ENCODE measurements at regions of chr3 and their contacts with region 1.

Region 1: DNA sequence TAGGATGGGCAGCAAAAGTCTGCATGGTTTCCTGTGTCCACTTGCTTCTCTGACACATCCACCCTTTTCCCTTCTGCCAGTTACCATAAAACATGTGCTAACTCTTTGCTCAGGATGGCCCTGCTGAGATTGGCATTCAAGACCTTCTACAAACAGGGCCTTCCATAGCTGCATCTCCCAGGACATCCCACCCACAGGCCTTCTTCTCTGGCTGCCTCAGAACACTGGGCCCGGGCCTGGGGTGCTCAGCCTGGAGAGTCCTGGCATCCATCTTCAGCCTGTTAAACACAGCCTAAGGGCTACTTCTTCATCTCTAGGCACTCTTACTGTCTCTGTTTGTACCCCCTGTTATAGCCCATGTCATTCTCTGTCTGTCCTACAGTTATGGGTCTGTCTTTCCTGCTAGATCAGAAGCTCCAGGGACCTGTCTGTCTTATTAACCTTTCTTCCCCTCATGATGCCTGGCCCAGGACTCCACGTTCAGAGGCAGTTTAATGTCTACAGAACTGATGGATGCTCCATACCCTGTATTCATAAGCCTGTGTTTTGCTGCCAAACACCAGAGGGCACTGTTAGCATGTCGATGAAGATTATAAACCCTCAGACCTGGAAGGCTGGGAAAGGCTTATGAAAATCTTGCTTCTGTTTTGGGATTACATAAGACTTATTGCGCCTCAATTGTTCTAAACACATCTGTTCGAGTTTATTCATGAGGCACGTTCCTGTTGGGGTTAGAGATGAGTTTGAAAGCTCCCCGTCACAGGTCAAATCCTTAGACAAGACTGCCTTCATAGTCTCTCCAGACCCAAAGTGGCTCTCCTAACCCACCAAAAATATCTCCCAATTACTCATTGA is 16.5 kb downstream of the SEMA3G start:
- DNase-seq: peak; percentile 50 to 51
- H3K4me3 ChIP-seq: no peak overlapping the region
- H3K27ac ChIP-seq: no peak overlapping the region
- H3K4me1 ChIP-seq: peaks cover 9% of the 10 kb centered on the region; the same call in 1 of the 2 replicates
- H3K27me3 ChIP-seq: no peaks in the 10 kb centered on the region
- CTCF ChIP-seq: peak; percentile 75

Region 2: GRCh38 chr3:52291508-52292181 is 136.7 kb before region 1 on chr3:
- CTCF ChIA-PET with region 1: no interaction called
- POLR2A ChIA-PET with region 1: no interaction called
- intact Hi-C with region 1: no loop called
- DNase-seq: peak in 1 of 2 experiments; percentile 21
- H3K4me3 ChIP-seq: no peak overlapping the region
- H3K27ac ChIP-seq: no peak overlapping the region
- H3K4me1 ChIP-seq: peaks cover 7% of the 10 kb centered on the region; the same call in 1 of the 2 replicates
- H3K27me3 ChIP-seq: no peaks in the 10 kb centered on the region
- CTCF ChIP-seq: peak; percentile 64

Region 3: DNA sequence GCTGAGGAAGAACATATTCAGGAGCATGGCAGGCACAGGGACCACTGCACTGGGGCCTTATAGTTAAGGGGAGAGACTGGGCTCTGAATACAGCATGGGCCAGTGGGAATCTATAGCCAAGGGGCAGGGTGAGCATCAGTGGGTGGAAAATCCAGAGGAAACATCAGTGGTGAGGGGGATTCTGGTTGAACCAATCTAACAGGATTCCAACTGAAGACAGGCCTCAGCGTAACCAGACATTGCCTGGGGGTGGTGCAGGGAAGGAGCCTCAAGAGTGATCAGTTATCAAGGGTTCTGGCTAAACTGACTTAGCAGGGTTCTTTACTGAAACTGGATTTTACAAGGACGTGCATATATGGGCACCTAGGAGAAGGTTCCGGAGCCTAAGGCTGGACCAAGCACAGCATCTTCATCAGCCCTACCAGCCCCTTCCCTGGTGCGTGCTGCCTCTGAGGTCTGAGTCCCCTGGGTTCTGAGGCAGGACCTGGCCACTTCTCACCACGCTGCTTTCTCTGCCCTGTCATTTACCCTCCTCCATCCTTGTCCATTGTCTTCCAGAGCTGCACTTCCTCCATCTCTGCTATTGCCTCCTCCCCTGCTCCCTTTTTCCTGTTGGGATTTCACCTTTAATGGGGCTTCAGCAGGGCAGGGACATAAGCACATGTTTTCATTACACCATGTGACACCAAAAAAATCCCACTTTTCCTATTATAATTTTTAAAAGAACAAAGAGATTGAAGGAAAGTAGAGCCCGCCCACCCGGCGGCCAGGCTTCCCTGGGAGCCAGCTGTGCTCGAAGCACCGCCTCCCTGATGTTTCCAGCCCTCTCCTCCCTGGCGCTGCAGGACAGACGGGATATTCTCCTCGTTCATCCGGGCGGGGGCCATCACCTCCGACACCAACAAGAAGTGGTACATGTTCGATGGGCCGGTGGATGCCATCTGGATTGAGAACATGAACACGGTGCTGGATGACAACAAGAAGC is 60.2 kb before region 1 on chr3:
- CTCF ChIA-PET with region 1: no interaction called
- POLR2A ChIA-PET with region 1: no interaction called
- intact Hi-C with region 1: no loop called
- DNase-seq: no peak
- H3K4me3 ChIP-seq: no peak overlapping the region
- H3K27ac ChIP-seq: no peak overlapping the region
- H3K4me1 ChIP-seq: no peaks in the 10 kb centered on the region
- H3K27me3 ChIP-seq: no peaks in the 10 kb centered on the region
- CTCF ChIP-seq: no peak

Region 4: DNA sequence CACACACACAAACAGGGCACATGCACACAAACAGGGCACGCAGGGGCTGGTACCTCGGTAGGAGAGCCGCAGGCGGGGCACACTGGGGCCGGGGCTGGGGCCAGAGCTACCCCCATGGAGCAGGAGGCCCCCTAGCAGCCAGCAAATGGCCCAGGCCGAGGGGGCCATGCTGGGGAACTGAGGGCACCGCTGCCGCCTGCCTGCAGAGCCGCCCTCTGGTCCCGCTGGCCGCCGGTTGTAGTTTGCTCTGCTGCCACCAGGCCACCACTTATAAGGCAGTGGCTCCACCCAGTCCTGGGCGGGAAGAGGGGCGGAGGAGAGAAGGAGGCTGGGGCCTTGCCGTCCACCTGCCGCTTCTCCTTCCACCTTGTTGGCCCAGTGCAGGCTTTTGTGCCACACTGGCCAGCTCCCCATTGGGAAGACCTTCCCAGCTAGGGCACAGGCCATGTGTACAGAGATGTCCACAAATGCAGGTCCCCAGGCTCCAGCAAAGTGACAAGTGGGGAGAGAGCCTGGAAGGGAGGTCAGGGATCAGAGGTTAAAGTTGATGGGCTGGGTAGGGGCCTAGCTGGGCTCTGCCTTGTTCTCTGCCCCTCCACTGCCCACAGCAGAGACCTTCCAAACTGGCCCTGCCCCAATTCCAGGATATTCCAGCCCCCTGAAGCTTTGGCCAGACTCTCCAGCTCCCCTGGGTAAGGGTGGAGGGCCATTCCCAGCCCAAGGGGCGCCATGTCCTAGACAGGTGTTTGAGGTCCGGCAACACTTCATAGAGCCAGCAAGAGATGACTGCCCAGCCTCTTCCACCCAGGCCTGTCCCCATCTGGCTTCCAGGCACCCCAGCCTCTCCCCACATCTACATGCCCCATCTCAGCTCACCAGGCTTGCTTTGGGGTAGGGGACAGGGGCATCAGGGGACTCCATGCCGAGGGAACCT is 16.7 kb after region 1 on chr3 and contains the start of gene SEMA3G:
- CTCF ChIA-PET with region 1: interaction called, 6 read pairs
- POLR2A ChIA-PET with region 1: no interaction called
- intact Hi-C with region 1: loop called (anchors 1 kb)
- DNase-seq: peak; percentile 48 to 84
- H3K4me3 ChIP-seq: no peak within 1 kb of the TSS
- H3K27ac ChIP-seq: no peak within 1 kb of the TSS
- H3K4me1 ChIP-seq: peaks cover 7% of the 10 kb centered on the region; the same call in 1 of the 2 replicates
- H3K27me3 ChIP-seq: no peaks in the 10 kb centered on the region
- CTCF ChIP-seq: peak; percentile 52
- total RNA-seq, gene SEMA3G: 1.3 and 1.4 TPM in 2 replicates

Region 5: GRCh38 chr3:52682016-52682415 is 253.6 kb after region 1 on chr3:
- CTCF ChIA-PET with region 1: no interaction called
- POLR2A ChIA-PET with region 1: interaction called, 51 read pairs
- intact Hi-C with region 1: loop called (anchors 5 kb)
- DNase-seq: peak; percentile 10 to 48
- H3K4me3 ChIP-seq: no peak overlapping the region
- H3K27ac ChIP-seq: 0 out of 2 replicates have a peak overlapping the region, but pooled peaks have one; percentile 16
- H3K4me1 ChIP-seq: peaks cover 24% of the 10 kb centered on the region
- H3K27me3 ChIP-seq: no peaks in the 10 kb centered on the region
- CTCF ChIP-seq: peak; percentile 27; the same call in 1 of the 2 replicates

Region 6: DNA sequence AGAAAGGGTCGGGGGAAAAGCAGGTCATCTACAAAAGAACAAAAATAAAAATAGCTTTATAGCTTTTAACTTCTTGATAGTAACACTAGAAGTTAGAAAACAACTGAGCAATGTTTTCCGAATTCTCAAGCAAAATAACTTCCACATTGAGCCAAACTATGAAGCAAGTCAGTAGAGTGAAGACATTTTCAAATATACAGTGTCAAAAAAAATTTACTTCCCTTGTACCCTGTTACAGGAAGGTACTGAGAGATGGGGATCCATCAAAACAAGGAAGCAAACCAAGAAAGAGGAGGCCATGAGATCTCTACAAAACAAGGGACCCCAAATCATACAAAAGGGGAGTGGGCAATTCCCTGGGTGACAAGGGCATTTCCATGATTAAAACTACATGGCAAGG is 495.6 kb after region 1 on chr3:
- CTCF ChIA-PET with region 1: no interaction called
- POLR2A ChIA-PET with region 1: interaction called, 57 read pairs
- intact Hi-C with region 1: no loop called
- DNase-seq: no peak
- H3K4me3 ChIP-seq: no peak overlapping the region
- H3K27ac ChIP-seq: no peak overlapping the region
- H3K4me1 ChIP-seq: no peaks in the 10 kb centered on the region
- H3K27me3 ChIP-seq: no peaks in the 10 kb centered on the region
- CTCF ChIP-seq: no peak

Region 7: GRCh38 chr3:53072653-53073552 is 644.5 kb after region 1 on chr3:
- CTCF ChIA-PET with region 1: no interaction called
- POLR2A ChIA-PET with region 1: no interaction called
- intact Hi-C with region 1: loop called (anchors 5 kb)
- DNase-seq: peak; percentile 58 to 80
- H3K4me3 ChIP-seq: peak overlapping the region; percentile 46; the same call in 1 of the 2 replicates
- H3K27ac ChIP-seq: no peak overlapping the region
- H3K4me1 ChIP-seq: 0 out of 2 replicates have a peak, but pooled peaks cover 3% of the 10 kb centered on the region
- H3K27me3 ChIP-seq: no peaks in the 10 kb centered on the region
- CTCF ChIP-seq: peak; percentile 86